Heart right ventricle (tissue), 16 donors: ENCODE measurements at regions of chr11 and their contacts with region 1.

Region 1: DNA sequence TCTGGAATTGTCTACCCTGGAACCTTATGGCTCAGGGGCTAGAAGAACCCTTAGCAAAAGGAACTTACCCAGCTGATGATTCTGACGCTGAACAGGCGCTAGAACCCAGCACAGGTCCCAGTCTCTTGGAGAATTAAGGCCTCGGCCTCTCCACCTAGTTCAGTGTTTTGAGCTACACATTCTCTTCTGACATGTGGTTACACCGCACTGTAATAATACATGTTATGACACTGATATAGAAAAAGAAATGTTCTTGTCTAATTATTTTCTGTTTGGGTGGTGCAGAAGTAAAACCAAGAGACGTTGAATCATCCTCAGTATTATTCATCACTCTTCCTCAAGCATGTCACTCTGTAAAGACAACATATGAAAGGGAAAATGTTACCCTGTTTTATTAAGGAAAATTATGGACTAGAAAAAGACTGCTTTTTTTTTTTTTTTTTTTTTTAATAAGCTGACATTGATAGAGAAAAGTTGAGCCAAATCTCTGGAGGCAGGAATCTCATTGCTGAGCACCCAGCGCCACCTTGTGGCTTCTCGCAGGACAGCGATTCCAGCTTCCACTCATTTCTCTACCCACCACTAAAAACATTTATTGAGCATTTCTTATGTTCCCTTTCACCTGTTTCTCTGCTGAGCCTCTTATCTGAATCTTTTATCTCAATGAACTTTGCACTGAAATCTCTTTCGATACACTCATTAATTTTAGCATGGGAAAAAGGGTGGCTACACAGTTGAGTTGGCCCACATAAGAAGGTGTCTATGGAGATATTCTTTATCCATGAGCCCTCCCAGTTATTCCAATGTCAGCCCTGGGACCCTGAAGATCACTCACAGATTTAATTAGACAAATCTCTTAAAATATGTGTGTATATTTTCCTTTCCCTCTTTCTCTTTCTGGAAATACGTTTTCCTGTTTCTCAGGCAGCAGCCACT is 12.6 kb upstream of the APLNR start:
- DNase-seq: peak; percentile 69 to 75
- ATAC-seq: peak; percentile 38 to 88 (median 70)
- H3K4me3 ChIP-seq: peak overlapping the region in 4 of 10 donors; percentile 2 to 30 (median 14)
- H3K27ac ChIP-seq: peak overlapping the region in 6 of 10 donors; percentile 12 to 75 (median 50)
- H3K4me1 ChIP-seq: peaks cover 0 to 37% (median 27%) of the 10 kb centered on the region in 9 donors
- H3K27me3 ChIP-seq: peaks cover 0 to 8% (median 0%) of the 10 kb centered on the region in 7 donors
- CTCF ChIP-seq: peak; percentile 70 to 88 (median 84)

Region 2: GRCh38 chr11:56841210-56841810 is 408.3 kb before region 1 on chr11:
- intact Hi-C with region 1: loop called (anchors 1 to 5 kb)
- DNase-seq: peak in 1 of 2 donors; percentile 40
- ATAC-seq: peak in 3 of 8 donors; percentile 35 to 75 (median 53)
- H3K4me3 ChIP-seq: no peak overlapping the region
- H3K27ac ChIP-seq: no peak overlapping the region
- H3K4me1 ChIP-seq: peaks cover 0 to 4% (median 0%) of the 10 kb centered on the region in 9 donors
- H3K27me3 ChIP-seq: peaks cover 0 to 9% (median 0%) of the 10 kb centered on the region in 7 donors
- CTCF ChIP-seq: peak; percentile 45 to 81 (median 70)

Region 3: GRCh38 chr11:57116654-57117053 is 133.0 kb before region 1 on chr11:
- intact Hi-C with region 1: loop called in 6 of 10 experiments (anchors 1 to 5 kb)
- DNase-seq: peak in 1 of 2 donors; percentile 23
- ATAC-seq: peak in 4 of 8 donors; percentile 47 to 57 (median 54)
- H3K4me3 ChIP-seq: no peak overlapping the region
- H3K27ac ChIP-seq: no peak overlapping the region
- H3K4me1 ChIP-seq: no peaks in the 10 kb centered on the region
- H3K27me3 ChIP-seq: no peaks in the 10 kb centered on the region
- CTCF ChIP-seq: peak in 8 of 9 donors; percentile 28 to 73 (median 62)

Region 4: GRCh38 chr11:57196596-57196995 is 53.1 kb before region 1 on chr11:
- intact Hi-C with region 1: loop called in 5 of 10 experiments (anchors 5 kb)
- DNase-seq: no peak
- ATAC-seq: peak in 2 of 8 donors; percentile 33 to 48
- H3K4me3 ChIP-seq: no peak overlapping the region
- H3K27ac ChIP-seq: peak overlapping the region in 6 of 10 donors; percentile 12 to 75 (median 56)
- H3K4me1 ChIP-seq: peaks cover 13 to 79% (median 58%) of the 10 kb centered on the region in 9 donors
- H3K27me3 ChIP-seq: no peaks in the 10 kb centered on the region
- CTCF ChIP-seq: no peak

Region 5: GRCh38 chr11:57213342-57214095 is 36.1 kb before region 1 on chr11:
- intact Hi-C with region 1: no loop called
- DNase-seq: no peak
- ATAC-seq: peak; percentile 41 to 65 (median 54)
- H3K4me3 ChIP-seq: peak overlapping the region in 1 of 10 donors; percentile 23
- H3K27ac ChIP-seq: peak overlapping the region in 9 of 10 donors; percentile 42 to 80 (median 61)
- H3K4me1 ChIP-seq: peaks cover 2 to 80% (median 49%) of the 10 kb centered on the region in 9 donors
- H3K27me3 ChIP-seq: peaks cover 0 to 11% (median 4%) of the 10 kb centered on the region in 7 donors
- CTCF ChIP-seq: no peak

Region 6: GRCh38 chr11:57277845-57278709 is 28.4 kb after region 1 on chr11:
- intact Hi-C with region 1: loop called in 2 of 10 experiments (anchors 1 to 2 kb)
- DNase-seq: peak; percentile 68 to 81
- ATAC-seq: peak; percentile 57 to 80 (median 73)
- H3K4me3 ChIP-seq: peak overlapping the region in 3 of 10 donors; percentile 5 to 24 (median 8)
- H3K27ac ChIP-seq: peak overlapping the region in 9 of 10 donors; percentile 59 to 92 (median 82)
- H3K4me1 ChIP-seq: peaks cover 0 to 40% (median 26%) of the 10 kb centered on the region in 9 donors
- H3K27me3 ChIP-seq: no peaks in the 10 kb centered on the region
- CTCF ChIP-seq: peak; percentile 70 to 87 (median 84)